ENCODE measurements at regions of chr19 and their contacts with region 1.

Region 1: GRCh38 chr19:39445265-39446111 is at the start of gene SUPT5H:
- DNase-seq: peak; percentile 84
- ATAC-seq: peak; percentile 94
- H3K4me3 Mint-ChIP-seq: peak within 1 kb of the TSS; percentile 96
- H3K27ac Mint-ChIP-seq: peak within 1 kb of the TSS; percentile 93
- H3K4me1 Mint-ChIP-seq: peaks cover 62% of the 10 kb centered on the region
- H3K27me3 Mint-ChIP-seq: no peaks in the 10 kb centered on the region
- CTCF ChIP-seq: no peak
- total RNA-seq, gene SUPT5H: 184 and 200 TPM in 2 replicates

Region 2: DNA sequence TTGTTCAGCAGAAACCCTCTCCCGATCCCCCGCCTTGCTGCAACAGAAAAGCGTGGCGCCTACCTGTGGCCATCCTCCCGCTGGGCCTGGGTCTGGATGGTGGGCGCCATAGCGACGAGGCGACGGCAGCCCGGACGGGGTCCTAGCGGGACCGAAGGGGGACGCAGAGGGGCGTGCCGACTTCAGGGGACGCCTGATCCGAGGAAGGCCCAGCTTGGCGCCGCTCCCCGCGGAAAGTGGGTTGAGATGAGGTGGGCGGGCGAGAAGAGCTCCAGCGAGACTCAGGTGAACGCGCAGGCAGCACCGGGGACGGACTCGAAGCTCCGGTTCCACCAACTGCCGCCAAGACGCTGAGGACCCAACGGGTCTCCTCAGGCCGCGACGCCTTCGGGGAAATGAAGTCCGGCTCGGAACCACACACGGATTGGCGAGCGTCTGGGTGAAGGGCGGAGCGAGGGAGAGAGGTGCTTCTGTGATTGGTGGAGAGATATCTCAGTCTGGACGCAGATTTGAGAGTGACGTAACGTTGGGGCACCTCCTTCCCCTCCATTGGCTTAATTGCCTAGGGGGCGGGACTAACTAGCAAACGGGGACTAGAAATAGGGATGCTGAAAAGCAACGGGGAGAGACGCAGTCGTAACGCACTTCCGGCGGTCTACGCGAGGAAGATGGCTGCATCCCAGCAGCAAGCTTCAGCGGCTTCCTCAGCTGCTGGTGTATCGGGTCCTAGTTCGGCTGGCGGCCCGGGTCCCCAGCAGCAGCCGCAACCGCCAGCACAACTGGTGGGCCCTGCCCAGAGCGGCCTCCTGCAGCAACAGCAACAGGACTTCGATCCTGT is 54.5 kb before region 1 on chr19 and contains the starts of genes MED29 and PAF1:
- CTCF ChIA-PET with region 1: no interaction called
- POLR2A ChIA-PET with region 1: interaction called, 20 read pairs
- intact Hi-C with region 1: loop called (anchors 1 kb)
- DNase-seq: peak; percentile 84
- ATAC-seq: peak; percentile 91
- H3K4me3 Mint-ChIP-seq: peak within 1 kb of the TSS; percentile 91
- H3K27ac Mint-ChIP-seq: peak within 1 kb of the TSS; percentile 98
- H3K4me1 Mint-ChIP-seq: peaks cover 38% of the 10 kb centered on the region
- H3K27me3 Mint-ChIP-seq: no peaks in the 10 kb centered on the region
- CTCF ChIP-seq: no peak
- total RNA-seq, gene MED29: 38.0 and 39.0 TPM in 2 replicates
- total RNA-seq, gene PAF1: 50.3 and 52.4 TPM in 2 replicates

Region 3: DNA sequence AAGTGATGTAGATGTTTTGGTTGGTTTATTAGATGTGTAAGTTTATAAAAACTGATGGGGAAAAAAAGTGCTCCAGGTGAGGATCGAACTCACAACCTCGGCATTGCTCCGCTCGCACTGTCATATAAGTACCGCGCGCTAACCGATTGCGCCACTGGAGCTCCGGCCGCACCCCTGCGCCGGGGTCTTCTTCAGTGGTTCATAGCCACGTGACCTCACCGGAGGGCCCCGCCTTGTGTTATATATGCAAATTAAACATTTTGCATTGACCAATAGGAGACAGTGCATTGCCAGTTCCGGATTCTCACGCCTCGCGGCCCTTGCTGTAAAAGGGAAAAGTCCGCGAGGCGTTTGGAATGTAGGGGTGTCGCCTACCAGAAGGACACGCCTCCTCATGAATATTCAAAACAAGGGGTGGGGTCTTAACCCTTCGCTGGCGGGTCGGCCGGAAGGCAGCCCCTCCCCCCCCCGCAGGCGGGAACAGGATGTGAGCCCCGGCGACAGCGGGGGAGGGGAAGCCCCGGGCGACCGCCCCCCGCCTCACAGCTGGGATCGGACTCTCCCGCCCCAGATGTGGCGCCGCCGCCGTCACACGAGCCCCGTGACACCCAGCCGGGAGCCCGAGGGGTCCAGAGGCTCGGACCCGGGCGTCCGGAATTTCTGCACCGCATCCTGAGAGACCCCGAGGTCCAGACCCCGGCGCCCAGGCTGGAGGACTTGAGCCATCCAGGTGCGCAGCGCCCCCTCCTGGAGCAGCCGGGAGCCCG is 33.2 kb before region 1 on chr19 and contains the start of gene PLEKHG2:
- CTCF ChIA-PET with region 1: interaction called, 5 read pairs
- POLR2A ChIA-PET with region 1: interaction called, 9 read pairs
- intact Hi-C with region 1: loop called (anchors 1 kb)
- DNase-seq: peak; percentile 97
- ATAC-seq: peak; percentile 59
- H3K4me3 Mint-ChIP-seq: peak within 1 kb of the TSS; percentile 89
- H3K27ac Mint-ChIP-seq: peak within 1 kb of the TSS; percentile 98
- H3K4me1 Mint-ChIP-seq: peaks cover 59% of the 10 kb centered on the region
- H3K27me3 Mint-ChIP-seq: peaks cover 4% of the 10 kb centered on the region
- CTCF ChIP-seq: no peak
- total RNA-seq, gene PLEKHG2: 111 and 125 TPM in 2 replicates

Region 4: GRCh38 chr19:39502640-39503417 is 57.3 kb after region 1 on chr19:
- CTCF ChIA-PET with region 1: interaction called, 4 read pairs
- POLR2A ChIA-PET with region 1: interaction called, 6 read pairs
- intact Hi-C with region 1: loop called (anchors 2 kb)
- DNase-seq: peak; percentile 81
- ATAC-seq: peak; percentile 62
- H3K4me3 Mint-ChIP-seq: no peak overlapping the region
- H3K27ac Mint-ChIP-seq: no peak overlapping the region
- H3K4me1 Mint-ChIP-seq: peaks cover 41% of the 10 kb centered on the region
- H3K27me3 Mint-ChIP-seq: peaks cover 46% of the 10 kb centered on the region
- CTCF ChIP-seq: no peak

Region 5: GRCh38 chr19:39557441-39558151 is 112.1 kb after region 1 on chr19:
- CTCF ChIA-PET with region 1: no interaction called
- POLR2A ChIA-PET with region 1: no interaction called
- intact Hi-C with region 1: no loop called
- DNase-seq: no peak
- ATAC-seq: no peak
- H3K4me3 Mint-ChIP-seq: peak overlapping the region; percentile 70
- H3K27ac Mint-ChIP-seq: peak overlapping the region; percentile 71
- H3K4me1 Mint-ChIP-seq: peaks cover 29% of the 10 kb centered on the region
- H3K27me3 Mint-ChIP-seq: no peaks in the 10 kb centered on the region
- CTCF ChIP-seq: no peak

Region 6: GRCh38 chr19:39671738-39672363 is 226.4 kb after region 1 on chr19:
- CTCF ChIA-PET with region 1: interaction called, 6 read pairs
- POLR2A ChIA-PET with region 1: interaction called, 12 read pairs
- intact Hi-C with region 1: loop called (anchors 1 kb)
- DNase-seq: no peak
- ATAC-seq: peak; percentile 68
- H3K4me3 Mint-ChIP-seq: no peak overlapping the region
- H3K27ac Mint-ChIP-seq: no peak overlapping the region
- H3K4me1 Mint-ChIP-seq: peaks cover 4% of the 10 kb centered on the region
- H3K27me3 Mint-ChIP-seq: peaks cover 25% of the 10 kb centered on the region
- CTCF ChIP-seq: no peak

Region 7: GRCh38 chr19:39833464-39834286 is 388.2 kb after region 1 on chr19 and contains the start of gene DYRK1B:
- CTCF ChIA-PET with region 1: no interaction called
- POLR2A ChIA-PET with region 1: no interaction called
- intact Hi-C with region 1: loop called (anchors 5 kb)
- DNase-seq: peak; percentile 90
- ATAC-seq: peak; percentile 86
- H3K4me3 Mint-ChIP-seq: peak within 1 kb of the TSS; percentile 82
- H3K27ac Mint-ChIP-seq: peak within 1 kb of the TSS; percentile 87
- H3K4me1 Mint-ChIP-seq: peaks cover 33% of the 10 kb centered on the region
- H3K27me3 Mint-ChIP-seq: no peaks in the 10 kb centered on the region
- CTCF ChIP-seq: no peak
- total RNA-seq, gene DYRK1B: 16.9 and 17.2 TPM in 2 replicates